ENCODE measurements at regions of chr17 and their contacts with region 1.

Region 1: DNA sequence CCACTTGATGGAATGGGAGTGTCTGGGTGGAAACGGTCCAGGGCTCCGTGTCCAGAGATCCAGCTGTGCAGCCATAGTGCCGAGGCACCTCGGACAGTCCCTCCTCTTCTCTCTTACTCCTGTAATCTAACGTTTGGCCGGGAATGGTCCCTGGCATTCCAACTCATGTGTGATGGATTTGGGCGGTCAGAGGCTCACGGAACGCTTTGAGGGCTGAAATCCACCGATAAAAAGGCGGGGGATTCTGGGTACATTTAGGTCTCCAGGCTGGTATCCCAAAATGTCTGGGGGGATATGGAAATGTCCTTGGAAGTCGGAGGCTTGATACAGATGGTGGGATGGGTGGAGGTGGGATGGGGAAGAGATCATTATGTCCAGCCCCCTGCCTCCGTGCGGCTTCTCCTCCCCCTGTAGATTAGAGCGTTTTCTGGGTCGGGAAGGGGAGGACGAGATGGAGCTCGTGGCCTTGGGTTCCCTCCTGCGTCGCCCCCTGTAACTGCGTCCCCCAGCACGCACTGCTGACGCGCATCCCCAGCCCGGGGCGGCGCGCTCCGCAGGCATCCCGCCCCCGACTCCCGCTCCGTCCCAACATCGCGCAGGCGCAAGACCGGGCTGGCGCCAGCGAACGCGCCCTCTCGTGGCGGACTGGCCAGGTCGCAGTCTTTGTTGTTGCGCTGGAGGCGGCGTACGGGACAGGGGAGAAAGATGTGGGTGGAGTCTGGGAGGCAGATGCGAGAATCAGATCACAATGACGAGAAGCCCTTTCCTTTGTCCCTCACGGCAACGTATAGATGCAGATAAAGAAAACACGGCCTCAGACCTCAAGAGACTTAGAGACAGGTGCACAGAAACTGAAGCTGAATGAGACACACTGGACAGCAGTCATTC is 4.5 kb upstream of the SGCA start:
- DNase-seq: peak; percentile 74 to 91
- H3K4me3 ChIP-seq: peak overlapping the region; percentile 59
- H3K27ac ChIP-seq: no peak overlapping the region
- H3K4me1 ChIP-seq: peaks cover 5% of the 10 kb centered on the region
- H3K27me3 ChIP-seq: no peaks in the 10 kb centered on the region
- CTCF ChIP-seq: peak; percentile 88

Region 2: GRCh38 chr17:50120475-50121253 is 40.6 kb before region 1 on chr17:
- CTCF ChIA-PET with region 1: no interaction called
- POLR2A ChIA-PET with region 1: no interaction called
- intact Hi-C with region 1: no loop called
- DNase-seq: no peak
- H3K4me3 ChIP-seq: no peak overlapping the region
- H3K27ac ChIP-seq: no peak overlapping the region
- H3K4me1 ChIP-seq: no peaks in the 10 kb centered on the region
- H3K27me3 ChIP-seq: peaks cover 43% of the 10 kb centered on the region
- CTCF ChIP-seq: no peak

Region 3: GRCh38 chr17:50139950-50140871 is 21.1 kb before region 1 on chr17:
- CTCF ChIA-PET with region 1: interaction called, 3 read pairs
- POLR2A ChIA-PET with region 1: interaction called, 6 read pairs
- intact Hi-C with region 1: loop called (anchors 2 kb)
- DNase-seq: peak in 1 of 2 experiments; percentile 62
- H3K4me3 ChIP-seq: no peak overlapping the region
- H3K27ac ChIP-seq: no peak overlapping the region
- H3K4me1 ChIP-seq: peaks cover 14% of the 10 kb centered on the region
- H3K27me3 ChIP-seq: no peaks in the 10 kb centered on the region
- CTCF ChIP-seq: peak; percentile 97

Region 4: DNA sequence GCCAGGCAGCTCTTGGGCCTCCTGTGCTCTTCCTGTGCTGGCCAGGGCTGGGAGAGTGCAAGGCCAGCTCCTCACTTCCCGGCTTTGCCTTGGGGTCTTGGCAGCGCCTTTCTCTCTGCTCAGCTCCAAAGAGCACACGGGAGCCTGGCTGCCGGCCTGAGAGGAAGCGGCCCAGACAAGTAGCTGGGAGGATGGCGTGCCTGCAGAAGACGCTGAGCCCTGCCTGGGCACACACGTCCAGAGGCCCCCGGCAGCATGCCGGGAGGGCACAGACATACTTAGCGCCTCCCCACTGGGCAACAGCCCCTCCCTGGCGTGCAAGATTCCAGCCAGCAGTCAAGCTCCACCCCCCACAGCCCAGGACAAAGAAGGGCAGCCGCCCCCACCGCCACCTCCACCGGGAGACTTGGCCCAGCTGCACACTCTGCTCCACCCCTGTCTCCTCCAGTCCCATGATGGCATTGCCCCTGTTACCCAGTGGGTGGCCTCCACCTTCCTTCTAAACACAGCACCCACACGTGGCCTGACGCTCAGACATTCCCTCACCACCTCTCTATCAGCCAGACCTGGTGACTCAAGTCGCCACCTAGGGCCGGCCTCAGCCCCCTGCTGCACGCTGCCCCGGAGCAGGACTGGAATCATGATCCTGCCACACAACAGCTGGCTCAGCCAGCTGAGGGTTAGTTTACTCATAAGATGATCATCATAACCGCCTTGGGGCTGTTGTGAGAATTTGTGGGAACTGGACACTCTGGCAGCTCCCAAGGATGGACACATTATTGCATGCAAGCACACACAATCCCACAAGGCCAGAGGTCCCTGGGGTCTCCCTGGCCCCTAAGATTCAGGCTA is 16.9 kb after region 1 on chr17:
- CTCF ChIA-PET with region 1: no interaction called
- POLR2A ChIA-PET with region 1: no interaction called
- intact Hi-C with region 1: no loop called
- DNase-seq: peak; percentile 92 to 93
- H3K4me3 ChIP-seq: peak overlapping the region; percentile 5; the same call in 1 of the 2 replicates
- H3K27ac ChIP-seq: peak overlapping the region; percentile 32
- H3K4me1 ChIP-seq: peaks cover 18% of the 10 kb centered on the region
- H3K27me3 ChIP-seq: no peaks in the 10 kb centered on the region
- CTCF ChIP-seq: peak; percentile 76

Region 5: GRCh38 chr17:50200457-50201275 is 39.4 kb after region 1 on chr17:
- CTCF ChIA-PET with region 1: no interaction called
- POLR2A ChIA-PET with region 1: no interaction called
- intact Hi-C with region 1: no loop called
- DNase-seq: peak; percentile 76 to 91
- H3K4me3 ChIP-seq: peak overlapping the region; percentile 62; the same call in 1 of the 2 replicates
- H3K27ac ChIP-seq: 0 out of 2 replicates have a peak overlapping the region, but pooled peaks have one; percentile 84
- H3K4me1 ChIP-seq: peaks cover 22% of the 10 kb centered on the region
- H3K27me3 ChIP-seq: peaks cover 48% of the 10 kb centered on the region
- CTCF ChIP-seq: peak; percentile 100